ENCODE measurements at regions of chr3 and their contacts with region 1.

Region 1: DNA sequence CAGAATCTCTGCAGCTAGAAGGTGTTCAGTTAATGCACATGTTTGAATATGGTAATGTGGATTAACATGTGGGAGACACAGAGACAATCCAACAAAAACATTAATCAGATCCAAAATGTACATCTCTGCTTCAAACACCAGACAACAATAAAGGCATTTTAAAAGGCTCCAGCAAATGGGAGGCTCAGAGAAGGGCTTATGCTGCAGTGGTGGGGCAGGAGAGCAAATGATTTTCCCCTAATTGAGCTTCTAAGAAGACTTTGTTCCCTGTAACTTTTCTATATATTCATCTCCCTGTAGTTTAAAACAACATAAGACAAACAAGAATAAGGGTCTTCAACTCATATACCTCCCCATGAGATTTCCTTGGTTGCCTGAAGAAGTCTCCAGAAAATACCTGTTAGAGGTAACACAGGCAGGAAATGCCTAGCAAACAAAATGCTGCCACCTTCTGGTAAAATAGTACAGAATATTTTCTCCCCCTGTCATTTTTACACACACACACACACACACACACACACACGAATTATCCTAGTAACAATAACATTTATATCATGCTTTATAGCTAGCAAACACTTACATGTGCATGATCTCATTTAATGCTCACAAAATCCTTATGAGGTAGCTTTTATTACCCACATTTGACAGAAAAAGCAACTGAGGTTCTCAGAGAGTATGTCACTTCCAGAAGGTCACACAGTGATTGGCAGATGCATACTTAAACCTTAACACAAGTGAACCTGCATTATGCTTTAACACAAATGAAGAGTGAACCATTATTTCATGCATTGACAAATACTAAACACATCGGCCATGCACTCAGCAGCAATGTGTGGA is 123.4 kb upstream of the MB21D2 start:
- DNase-seq: peak; percentile 44
- CTCF ChIP-seq: peak; percentile 55

Region 2: DNA sequence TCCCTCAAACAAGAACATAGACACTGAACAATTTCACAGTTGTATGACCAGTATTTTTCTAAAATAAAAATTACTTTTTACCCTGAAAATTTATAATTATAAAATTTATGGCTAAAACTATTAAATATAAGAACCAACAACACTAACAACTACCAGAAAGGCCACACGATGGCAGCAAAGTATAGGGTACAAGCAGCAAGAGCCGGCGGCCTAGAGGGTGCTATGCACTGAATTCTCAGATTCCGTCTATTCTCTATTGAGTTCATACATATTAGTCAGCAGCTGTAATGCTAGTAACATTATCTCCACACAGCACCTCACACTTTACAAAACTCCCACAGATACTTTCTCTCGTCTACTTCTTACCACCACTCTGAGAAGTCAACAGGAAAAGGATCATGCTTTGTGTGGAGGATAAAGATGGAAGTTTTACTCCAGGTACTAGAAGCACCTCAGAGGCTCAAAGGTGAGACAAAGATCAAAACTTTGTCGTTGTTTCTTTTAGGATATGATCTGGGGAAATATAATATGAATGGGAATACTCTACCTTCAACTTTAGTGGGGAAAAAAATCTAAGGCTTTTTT is 474.3 kb before region 1 on chr3:
- CTCF ChIA-PET with region 1: interaction called, 21 read pairs
- POLR2A ChIA-PET with region 1: no interaction called
- DNase-seq: peak; percentile 50
- CTCF ChIP-seq: peak; percentile 54

Region 3: DNA sequence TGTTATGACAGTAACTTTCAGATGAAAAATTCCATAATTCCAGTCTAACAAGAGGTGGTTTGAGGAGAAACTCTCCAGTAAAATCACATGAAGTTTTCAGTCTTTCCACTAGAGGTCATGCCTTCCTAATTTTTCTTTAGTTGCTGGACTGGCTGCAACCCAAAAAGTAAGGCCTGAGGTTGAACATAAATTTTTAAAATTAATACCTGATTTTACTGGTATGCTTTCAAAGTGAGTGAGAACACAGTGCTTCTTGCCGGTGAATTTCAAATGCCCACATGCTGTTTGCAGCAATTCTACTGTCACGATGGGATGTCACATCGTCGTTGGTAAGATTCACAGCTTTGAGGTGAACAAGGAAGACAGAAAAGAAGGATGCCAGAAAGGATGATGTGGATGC is 224.7 kb before region 1 on chr3:
- CTCF ChIA-PET with region 1: interaction called, 260 read pairs
- POLR2A ChIA-PET with region 1: no interaction called
- DNase-seq: no peak
- CTCF ChIP-seq: peak; percentile 38

Region 4: DNA sequence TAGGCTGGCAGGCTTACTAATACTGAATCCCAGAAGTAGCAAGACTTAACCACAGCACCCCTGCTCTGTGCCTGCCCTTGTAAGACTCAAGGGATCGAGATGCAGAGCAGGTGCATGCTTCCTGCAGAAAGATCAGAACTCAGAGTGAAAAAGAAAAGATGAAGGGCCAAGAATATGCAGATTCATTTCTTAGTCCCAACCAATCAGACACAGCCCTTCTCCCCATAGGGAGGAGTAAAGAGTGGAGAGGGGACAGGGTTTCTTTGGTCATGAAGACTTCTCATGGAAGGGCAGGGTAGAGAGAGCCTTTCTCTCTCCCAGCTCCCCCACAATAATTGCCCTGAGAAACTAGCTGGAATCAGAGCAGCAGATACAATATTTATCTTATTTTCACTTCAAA is 17.8 kb before region 1 on chr3:
- CTCF ChIA-PET with region 1: interaction called, 16 read pairs
- POLR2A ChIA-PET with region 1: no interaction called
- DNase-seq: no peak
- CTCF ChIP-seq: no peak

Region 5: DNA sequence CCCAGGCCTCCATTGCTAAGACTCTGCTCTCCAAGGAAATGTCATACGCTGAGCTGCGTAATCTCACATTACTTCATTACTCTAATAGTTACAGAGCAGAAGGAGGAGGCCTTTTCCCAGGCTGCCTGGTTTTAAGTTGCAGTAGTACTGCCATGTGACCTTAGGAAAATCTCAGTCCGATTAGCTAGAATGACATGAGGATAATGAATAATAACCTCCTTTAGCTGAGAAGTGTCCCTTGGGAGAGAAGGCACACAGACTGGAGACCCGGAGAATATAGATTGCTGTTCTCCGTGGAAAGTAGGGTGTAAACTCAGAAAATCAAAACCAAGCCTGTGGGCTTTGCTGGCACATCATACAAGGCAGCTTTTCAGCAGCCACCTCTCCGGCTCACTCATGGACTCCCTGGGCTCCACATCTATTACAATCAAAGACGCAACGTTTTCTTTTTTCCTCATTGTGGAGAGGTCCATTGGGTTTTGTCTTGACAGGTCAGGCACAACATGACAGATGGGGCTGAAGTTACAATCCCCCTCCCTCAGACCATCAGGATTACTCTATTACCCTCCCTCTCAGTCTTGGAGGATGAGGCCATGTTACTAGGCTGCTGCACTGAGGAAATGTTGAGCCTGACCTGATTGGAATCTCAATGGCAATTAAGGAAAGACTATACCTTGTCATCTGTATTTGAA is 11.4 kb after region 1 on chr3:
- CTCF ChIA-PET with region 1: interaction called, 14 read pairs
- POLR2A ChIA-PET with region 1: no interaction called
- DNase-seq: no peak
- CTCF ChIP-seq: no peak

Region 6: GRCh38 chr3:193333232-193333631 is 292.2 kb after region 1 on chr3:
- CTCF ChIA-PET with region 1: no interaction called
- POLR2A ChIA-PET with region 1: no interaction called
- DNase-seq: no peak
- CTCF ChIP-seq: no peak